Lower leg skin (tissue), 4 donors: ENCODE measurements at regions of chr15 and their contacts with region 1.

Region 1: GRCh38 chr15:80461356-80462095 is 57.3 kb downstream of the ARNT2 start:
- DNase-seq: no peak
- H3K4me3 ChIP-seq: no peak overlapping the region
- CTCF ChIP-seq: no peak
- POLR2A ChIP-seq: no peak

Region 2: DNA sequence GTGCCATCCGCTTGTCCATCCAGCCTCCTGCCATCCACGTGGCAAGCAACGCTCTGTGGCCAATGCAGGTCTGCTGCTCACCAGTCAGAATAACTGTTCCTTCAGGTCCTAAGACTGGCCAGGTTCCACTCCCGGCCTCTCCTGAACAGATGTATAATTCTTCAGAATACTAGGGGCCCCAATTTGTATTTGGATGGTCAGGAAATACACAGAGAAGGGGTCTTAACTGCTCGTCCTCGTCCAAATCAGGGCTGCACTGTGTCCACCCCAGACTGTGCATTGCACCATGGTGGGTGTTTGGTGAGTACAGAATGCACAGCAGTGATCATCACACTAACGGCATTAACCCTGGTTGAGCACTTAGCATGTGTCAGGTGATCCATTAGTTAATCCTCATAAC is 983.4 kb before region 1 on chr15:
- intact Hi-C with region 1: no loop called
- DNase-seq: no peak
- H3K4me3 ChIP-seq: no peak overlapping the region
- CTCF ChIP-seq: no peak
- POLR2A ChIP-seq: no peak

Region 3: DNA sequence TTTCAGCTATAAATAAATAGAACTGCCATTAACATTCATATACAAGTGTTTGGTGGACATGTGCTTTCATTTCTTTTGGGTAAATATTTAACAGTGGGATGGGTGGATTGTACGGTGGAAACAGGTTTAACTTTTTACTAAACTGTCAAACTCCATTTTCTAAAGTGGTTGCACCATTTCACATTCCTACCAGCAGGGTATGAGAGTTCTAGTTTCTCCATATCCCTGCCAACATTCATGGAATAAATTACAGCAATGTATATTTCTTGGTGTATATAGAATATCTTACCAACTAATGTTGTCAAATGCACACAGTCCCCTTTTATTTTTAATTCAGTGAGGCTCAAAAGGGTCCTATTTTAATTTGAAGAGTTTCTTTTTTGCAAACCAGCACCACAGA is 138.2 kb before region 1 on chr15:
- intact Hi-C with region 1: no loop called
- DNase-seq: no peak
- H3K4me3 ChIP-seq: no peak overlapping the region
- CTCF ChIP-seq: no peak
- POLR2A ChIP-seq: no peak

Region 4: DNA sequence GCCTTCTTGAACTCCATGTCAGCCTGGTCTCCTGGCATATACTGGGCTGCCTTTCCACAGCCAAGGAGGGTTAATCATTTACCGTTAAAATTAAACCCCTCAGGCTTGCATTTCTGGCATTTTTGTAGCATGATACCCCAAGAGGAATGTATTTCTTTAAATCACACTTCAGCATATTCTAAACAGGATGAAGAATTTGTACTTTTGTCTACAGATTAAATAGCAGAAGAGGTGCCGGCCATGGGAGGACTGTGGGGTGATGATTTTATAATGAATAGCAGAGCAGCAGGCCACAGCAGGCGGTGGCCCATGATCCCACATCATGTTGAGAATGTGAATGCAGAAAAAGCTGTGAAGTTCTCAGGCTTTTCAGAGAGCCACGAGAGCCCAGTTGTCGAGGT is 32.8 kb after region 1 on chr15:
- intact Hi-C with region 1: no loop called
- DNase-seq: peak in 1 of 2 donors; percentile 26
- H3K4me3 ChIP-seq: no peak overlapping the region
- CTCF ChIP-seq: no peak
- POLR2A ChIP-seq: no peak

Region 5: GRCh38 chr15:80550219-80550907 is 88.8 kb after region 1 on chr15:
- intact Hi-C with region 1: loop called (anchors 10 kb)
- DNase-seq: no peak
- H3K4me3 ChIP-seq: no peak overlapping the region
- CTCF ChIP-seq: no peak
- POLR2A ChIP-seq: no peak